Activated CD8-positive, alpha-beta memory T cell treated with anti-CD3 and anti-CD28 coated beads, Interleukin-2, amount 10 ng/mL, durations not matched to agents 7 days and 5 days (primary cell): ENCODE measurements at regions of chr1 and their contacts with region 1.

Region 1: DNA sequence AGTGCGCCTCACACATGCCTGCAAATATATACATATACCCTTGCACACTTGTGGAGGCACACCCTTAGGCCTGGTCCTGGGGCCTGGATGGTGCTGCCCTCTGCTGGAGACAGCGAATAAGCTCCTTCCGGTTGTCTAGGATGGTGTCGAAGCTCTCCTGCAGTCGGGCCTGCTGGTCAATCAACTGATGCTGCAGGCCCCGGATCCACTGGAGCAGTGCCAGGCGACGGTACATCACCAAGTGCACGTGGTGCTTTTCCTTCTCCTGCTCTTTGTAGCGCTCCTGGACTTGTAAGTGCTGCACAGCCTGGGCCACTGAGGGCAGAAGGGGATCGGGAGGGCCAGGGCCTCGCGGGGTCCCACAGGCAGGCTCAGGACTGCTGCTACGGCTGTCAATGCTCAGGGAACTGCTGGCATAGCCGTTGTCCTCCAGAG is 3.1 kb downstream of the C1orf216 start:
- DNase-seq: peak; percentile 88
- ATAC-seq: peak; percentile 70
- H3K4me3 Mint-ChIP-seq: peak overlapping the region; percentile 5
- H3K27ac Mint-ChIP-seq: peak overlapping the region; percentile 50
- H3K4me1 Mint-ChIP-seq: peaks cover 36% of the 10 kb centered on the region
- H3K27me3 Mint-ChIP-seq: no peaks in the 10 kb centered on the region

Region 2: DNA sequence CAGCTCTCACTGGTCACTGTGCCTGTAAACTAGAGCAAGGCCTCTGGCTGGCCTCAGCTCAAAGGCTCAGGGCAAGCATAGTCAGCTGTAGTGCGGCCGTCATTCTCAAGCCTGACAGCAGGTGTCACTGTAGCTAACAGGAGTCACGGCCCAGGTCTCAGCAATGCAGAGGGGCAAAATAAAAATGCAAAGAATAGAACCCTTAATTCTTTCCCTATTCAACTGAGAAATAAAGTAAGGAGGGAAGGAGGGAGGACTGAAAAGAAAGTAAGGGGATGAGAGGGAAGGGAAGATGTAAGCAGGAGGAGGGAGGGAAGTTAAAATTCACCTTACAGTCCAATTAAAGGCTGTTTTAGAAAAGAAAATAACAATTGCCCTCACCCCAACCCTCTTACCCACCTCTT is 264.5 kb before region 1 on chr1:
- CTCF ChIA-PET with region 1: interaction called, 22 read pairs
- DNase-seq: peak; percentile 86
- ATAC-seq: peak; percentile 93
- H3K4me3 Mint-ChIP-seq: no peak overlapping the region
- H3K27ac Mint-ChIP-seq: peak overlapping the region; percentile 36
- H3K4me1 Mint-ChIP-seq: peaks cover 17% of the 10 kb centered on the region
- H3K27me3 Mint-ChIP-seq: no peaks in the 10 kb centered on the region

Region 3: DNA sequence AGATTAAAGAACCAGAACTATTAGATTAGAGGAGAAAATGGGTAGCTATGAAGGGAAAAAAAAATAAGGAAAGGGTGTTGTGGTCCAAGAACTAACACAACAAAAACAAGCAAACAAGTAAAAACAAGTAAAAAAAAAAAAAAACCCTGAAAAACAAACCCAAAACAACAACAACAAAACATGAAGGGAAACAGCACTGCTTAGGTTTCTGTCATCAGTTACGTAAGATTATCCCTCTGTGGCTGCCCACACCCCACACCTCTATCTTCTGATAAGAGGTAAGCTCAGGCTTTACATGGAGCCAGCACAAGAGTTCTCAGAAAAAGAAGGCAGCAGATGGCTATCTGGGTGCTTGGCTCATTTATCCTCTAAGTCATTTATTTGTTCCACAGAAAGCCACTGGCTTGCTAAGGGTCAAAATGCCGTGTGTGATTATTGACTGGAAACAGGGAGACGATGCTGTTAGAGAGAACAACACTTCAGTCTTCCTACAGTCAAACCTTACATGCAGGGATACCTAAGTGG is 215.9 kb before region 1 on chr1:
- CTCF ChIA-PET with region 1: no interaction called
- DNase-seq: peak; percentile 85
- ATAC-seq: peak; percentile 86
- H3K4me3 Mint-ChIP-seq: no peak overlapping the region
- H3K27ac Mint-ChIP-seq: peak overlapping the region; percentile 38
- H3K4me1 Mint-ChIP-seq: peaks cover 33% of the 10 kb centered on the region
- H3K27me3 Mint-ChIP-seq: no peaks in the 10 kb centered on the region

Region 4: GRCh38 chr1:35557292-35558063 is 158.1 kb before region 1 on chr1 and contains the starts of genes KIAA0319L and NCDN:
- CTCF ChIA-PET with region 1: interaction called, 11 read pairs
- DNase-seq: peak; percentile 99
- ATAC-seq: peak; percentile 94
- H3K4me3 Mint-ChIP-seq: peak within 1 kb of the TSS; percentile 93
- H3K27ac Mint-ChIP-seq: peak within 1 kb of the TSS; percentile 95
- H3K4me1 Mint-ChIP-seq: peaks cover 34% of the 10 kb centered on the region
- H3K27me3 Mint-ChIP-seq: no peaks in the 10 kb centered on the region
- total RNA-seq, gene KIAA0319L: 36.0 to 45.7 TPM
- total RNA-seq, gene NCDN: 20.1 to 31.7 TPM

Region 5: GRCh38 chr1:35577071-35577998 is 138.2 kb before region 1 on chr1:
- CTCF ChIA-PET with region 1: interaction called, 47 read pairs
- DNase-seq: peak; percentile 91
- ATAC-seq: peak; percentile 91
- H3K4me3 Mint-ChIP-seq: peak overlapping the region; percentile 77
- H3K27ac Mint-ChIP-seq: peak overlapping the region; percentile 86
- H3K4me1 Mint-ChIP-seq: peaks cover 30% of the 10 kb centered on the region
- H3K27me3 Mint-ChIP-seq: peaks cover 29% of the 10 kb centered on the region

Region 6: DNA sequence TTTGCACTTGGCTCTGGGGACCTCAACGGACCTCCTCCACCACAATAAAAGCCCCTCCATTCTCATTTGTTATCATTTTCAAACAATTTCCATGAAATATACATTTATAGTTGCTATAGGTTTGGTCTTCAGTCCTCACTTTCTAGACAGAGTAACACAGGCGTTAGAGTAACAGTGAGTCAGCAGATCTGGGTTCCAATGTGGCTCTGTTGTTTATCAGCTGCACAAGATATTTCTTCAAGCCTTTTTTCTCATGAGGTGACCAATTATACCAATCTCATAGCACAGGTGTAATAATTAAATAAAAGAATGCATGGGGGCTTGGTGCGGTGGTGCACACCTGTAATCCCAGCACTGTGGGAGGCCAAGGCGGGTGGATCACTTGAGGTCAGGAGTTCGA is 41.5 kb before region 1 on chr1:
- CTCF ChIA-PET with region 1: no interaction called
- DNase-seq: no peak
- ATAC-seq: no peak
- H3K4me3 Mint-ChIP-seq: no peak overlapping the region
- H3K27ac Mint-ChIP-seq: no peak overlapping the region
- H3K4me1 Mint-ChIP-seq: no peaks in the 10 kb centered on the region
- H3K27me3 Mint-ChIP-seq: peaks cover 9% of the 10 kb centered on the region

Region 7: DNA sequence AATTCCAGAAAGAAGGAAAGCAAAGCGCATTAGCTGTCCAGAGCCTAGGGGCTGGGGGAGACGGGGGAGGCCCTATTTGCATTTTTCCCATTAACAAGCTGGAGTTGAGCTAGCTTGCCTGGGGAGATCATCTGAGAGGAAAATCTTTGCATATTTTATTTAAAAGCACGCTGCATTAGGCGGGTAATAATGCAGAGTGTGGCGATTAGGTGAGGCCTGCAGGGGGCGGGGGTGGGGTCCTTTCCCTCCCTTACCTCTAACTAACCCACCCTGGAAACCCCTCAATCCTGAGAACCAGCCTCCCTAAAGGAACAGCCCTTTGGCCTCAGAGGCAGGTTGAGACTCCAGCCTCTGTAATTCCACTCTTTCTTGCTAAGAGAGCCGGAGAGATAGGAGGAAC is 13.1 kb before region 1 on chr1:
- CTCF ChIA-PET with region 1: interaction called, 18 read pairs
- DNase-seq: no peak
- ATAC-seq: no peak
- H3K4me3 Mint-ChIP-seq: no peak overlapping the region
- H3K27ac Mint-ChIP-seq: no peak overlapping the region
- H3K4me1 Mint-ChIP-seq: peaks cover 9% of the 10 kb centered on the region
- H3K27me3 Mint-ChIP-seq: peaks cover 76% of the 10 kb centered on the region

Region 8: GRCh38 chr1:35726450-35727433 is 11.2 kb after region 1 on chr1:
- CTCF ChIA-PET with region 1: interaction called, 55 read pairs
- DNase-seq: peak; percentile 55
- ATAC-seq: peak; percentile 90
- H3K4me3 Mint-ChIP-seq: no peak overlapping the region
- H3K27ac Mint-ChIP-seq: peak overlapping the region; percentile 35
- H3K4me1 Mint-ChIP-seq: no peaks in the 10 kb centered on the region
- H3K27me3 Mint-ChIP-seq: no peaks in the 10 kb centered on the region

Region 9: GRCh38 chr1:35769188-35769758 is 53.7 kb after region 1 on chr1:
- CTCF ChIA-PET with region 1: interaction called, 14 read pairs
- DNase-seq: peak; percentile 94
- ATAC-seq: peak; percentile 87
- H3K4me3 Mint-ChIP-seq: peak overlapping the region; percentile 96
- H3K27ac Mint-ChIP-seq: peak overlapping the region; percentile 79
- H3K4me1 Mint-ChIP-seq: peaks cover 31% of the 10 kb centered on the region
- H3K27me3 Mint-ChIP-seq: no peaks in the 10 kb centered on the region

Region 10: DNA sequence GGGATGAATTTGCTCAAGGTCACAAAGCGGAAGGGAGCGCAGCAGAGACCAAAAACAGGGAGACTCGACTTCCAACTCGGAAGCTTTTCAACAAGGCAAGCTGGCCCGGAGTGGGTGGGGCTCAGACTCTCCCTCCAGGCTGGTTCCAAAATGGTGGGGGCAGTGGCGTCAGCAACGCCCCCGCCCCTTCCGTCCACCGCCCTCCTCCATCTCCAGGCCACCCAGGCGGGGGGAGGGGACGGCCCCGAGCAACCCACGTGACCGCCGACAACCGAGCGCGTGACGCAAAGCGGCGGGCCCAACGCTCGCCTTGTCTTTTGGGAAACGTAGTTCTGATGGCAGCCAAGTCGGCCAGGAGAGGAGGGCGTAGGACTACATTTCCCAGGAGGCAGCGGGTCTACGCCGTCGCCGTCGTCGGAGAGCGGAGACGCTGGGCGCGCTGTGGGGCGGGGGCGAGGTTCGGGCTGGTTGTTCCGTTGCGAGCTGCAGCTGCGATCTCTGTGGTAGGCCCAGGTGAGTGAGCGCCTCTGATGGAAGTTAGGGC is 508.5 kb after region 1 on chr1 and contains the start of gene THRAP3:
- CTCF ChIA-PET with region 1: no interaction called
- DNase-seq: peak; percentile 100
- ATAC-seq: peak; percentile 92
- H3K4me3 Mint-ChIP-seq: peak within 1 kb of the TSS; percentile 94
- H3K27ac Mint-ChIP-seq: peak within 1 kb of the TSS; percentile 100
- H3K4me1 Mint-ChIP-seq: peaks cover 27% of the 10 kb centered on the region
- H3K27me3 Mint-ChIP-seq: no peaks in the 10 kb centered on the region
- total RNA-seq, gene THRAP3: 129 to 166 TPM

Region 11: GRCh38 chr1:36239941-36240637 is 524.5 kb after region 1 on chr1:
- CTCF ChIA-PET with region 1: no interaction called
- DNase-seq: no peak
- ATAC-seq: no peak
- H3K4me3 Mint-ChIP-seq: no peak overlapping the region
- H3K27ac Mint-ChIP-seq: peak overlapping the region; percentile 40
- H3K4me1 Mint-ChIP-seq: peaks cover 18% of the 10 kb centered on the region
- H3K27me3 Mint-ChIP-seq: no peaks in the 10 kb centered on the region